ENCODE measurements at regions of chr4 and their contacts with region 1.

Region 1: DNA sequence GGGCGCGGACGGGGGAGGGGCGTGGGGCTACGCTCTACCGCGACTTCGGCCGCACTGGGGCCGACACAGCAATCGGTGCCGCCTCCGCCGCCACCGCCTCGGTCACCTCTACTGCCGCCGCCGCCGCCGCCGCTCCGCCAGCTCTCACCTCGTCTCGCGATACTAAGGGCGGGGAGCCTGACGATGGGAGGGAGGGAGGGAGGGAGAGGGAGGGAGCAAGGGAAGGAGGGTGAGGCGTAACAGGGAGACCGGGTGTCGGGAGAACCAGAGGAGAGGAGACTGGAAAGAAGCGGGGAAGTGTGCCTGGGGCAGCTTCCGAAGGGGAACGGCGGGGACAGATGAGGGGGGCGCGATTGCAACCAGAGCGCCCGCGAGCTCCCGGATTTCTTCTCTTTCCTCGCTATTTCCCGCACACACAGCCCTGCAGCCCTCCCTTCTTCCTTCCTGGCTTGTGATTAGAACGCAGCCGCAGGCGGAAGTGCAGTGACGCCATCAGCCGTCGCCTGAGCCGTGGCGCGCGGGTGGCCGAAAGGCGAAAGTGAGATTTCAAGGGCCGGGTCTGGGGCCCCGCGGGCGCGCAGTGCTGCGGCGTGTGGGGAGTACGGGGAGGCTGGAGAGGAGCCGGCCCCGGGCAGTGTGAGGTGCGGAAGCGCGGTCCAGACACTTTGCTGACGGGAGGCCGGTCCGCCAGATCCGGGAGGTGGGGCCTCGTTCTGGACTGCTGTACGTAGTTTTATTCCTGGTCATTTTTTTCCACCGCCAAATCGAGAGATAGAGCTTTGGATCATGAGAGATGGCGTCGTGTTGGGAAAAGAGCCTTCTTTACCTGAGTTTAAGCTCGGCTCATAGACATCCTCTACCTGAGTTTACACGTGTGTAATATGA is at the start of gene ANKRD17:
- DNase-seq: peak; percentile 95
- H3K4me3 Mint-ChIP-seq: peak within 1 kb of the TSS; percentile 82
- H3K27ac Mint-ChIP-seq: peak within 1 kb of the TSS; percentile 99
- H3K4me1 Mint-ChIP-seq: peaks cover 17% of the 10 kb centered on the region
- H3K27me3 Mint-ChIP-seq: no peaks in the 10 kb centered on the region
- CTCF ChIP-seq: no peak
- total RNA-seq, gene ANKRD17: 62.8 and 65.7 TPM in 2 replicates

Region 2: GRCh38 chr4:72496112-72496511 is 762.8 kb before region 1 on chr4:
- CTCF ChIA-PET with region 1: interaction called, 3 read pairs
- POLR2A ChIA-PET with region 1: no interaction called
- intact Hi-C with region 1: loop called (anchors 10 kb)
- DNase-seq: peak; percentile 20
- H3K4me3 Mint-ChIP-seq: no peak overlapping the region
- H3K27ac Mint-ChIP-seq: no peak overlapping the region
- H3K4me1 Mint-ChIP-seq: no peaks in the 10 kb centered on the region
- H3K27me3 Mint-ChIP-seq: no peaks in the 10 kb centered on the region
- CTCF ChIP-seq: peak; percentile 25

Region 3: GRCh38 chr4:73019462-73020047 is 239.4 kb before region 1 on chr4:
- CTCF ChIA-PET with region 1: no interaction called
- POLR2A ChIA-PET with region 1: no interaction called
- intact Hi-C with region 1: loop called (anchors 5 kb)
- DNase-seq: peak; percentile 66
- H3K4me3 Mint-ChIP-seq: no peak overlapping the region
- H3K27ac Mint-ChIP-seq: no peak overlapping the region
- H3K4me1 Mint-ChIP-seq: no peaks in the 10 kb centered on the region
- H3K27me3 Mint-ChIP-seq: peaks cover 9% of the 10 kb centered on the region
- CTCF ChIP-seq: peak; percentile 62

Region 4: GRCh38 chr4:73127839-73128453 is 131.0 kb before region 1 on chr4:
- CTCF ChIA-PET with region 1: interaction called, 26 read pairs
- POLR2A ChIA-PET with region 1: interaction called, 11 read pairs
- intact Hi-C with region 1: loop called (anchors 1 kb)
- DNase-seq: peak; percentile 22
- H3K4me3 Mint-ChIP-seq: no peak overlapping the region
- H3K27ac Mint-ChIP-seq: no peak overlapping the region
- H3K4me1 Mint-ChIP-seq: no peaks in the 10 kb centered on the region
- H3K27me3 Mint-ChIP-seq: no peaks in the 10 kb centered on the region
- CTCF ChIP-seq: no peak

Region 5: GRCh38 chr4:73172161-73172560 is 86.8 kb before region 1 on chr4:
- CTCF ChIA-PET with region 1: interaction called, 3 read pairs
- POLR2A ChIA-PET with region 1: interaction called, 13 read pairs
- intact Hi-C with region 1: no loop called
- DNase-seq: no peak
- H3K4me3 Mint-ChIP-seq: no peak overlapping the region
- H3K27ac Mint-ChIP-seq: peak overlapping the region; percentile 24
- H3K4me1 Mint-ChIP-seq: peaks cover 22% of the 10 kb centered on the region
- H3K27me3 Mint-ChIP-seq: no peaks in the 10 kb centered on the region
- CTCF ChIP-seq: no peak

Region 6: DNA sequence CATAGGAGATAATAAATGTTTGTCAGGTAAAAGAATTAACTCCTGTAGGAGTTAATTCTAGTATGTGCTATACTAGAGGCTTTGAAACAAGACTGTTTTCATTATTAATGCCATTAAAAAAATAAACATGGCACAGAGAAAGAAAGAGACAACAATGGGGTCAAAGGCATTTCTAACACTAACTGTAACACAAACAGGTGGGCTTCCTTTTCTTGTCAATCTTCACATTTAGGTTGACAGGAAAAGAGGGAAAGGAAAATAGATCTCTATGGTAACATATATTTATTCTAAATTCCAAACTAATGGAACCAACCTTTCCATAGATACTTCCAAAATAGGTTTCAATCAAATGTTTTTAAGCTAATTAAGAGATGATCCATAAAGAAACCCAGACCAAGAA is 10.1 kb before region 1 on chr4:
- CTCF ChIA-PET with region 1: interaction called, 4 read pairs
- POLR2A ChIA-PET with region 1: interaction called, 12 read pairs
- intact Hi-C with region 1: no loop called
- DNase-seq: no peak
- H3K4me3 Mint-ChIP-seq: no peak overlapping the region
- H3K27ac Mint-ChIP-seq: no peak overlapping the region
- H3K4me1 Mint-ChIP-seq: peaks cover 32% of the 10 kb centered on the region
- H3K27me3 Mint-ChIP-seq: no peaks in the 10 kb centered on the region
- CTCF ChIP-seq: no peak

Region 7: GRCh38 chr4:73281396-73281795 is 22.5 kb after region 1 on chr4:
- CTCF ChIA-PET with region 1: interaction called, 4 read pairs
- POLR2A ChIA-PET with region 1: interaction called, 19 read pairs
- intact Hi-C with region 1: no loop called
- DNase-seq: no peak
- H3K4me3 Mint-ChIP-seq: no peak overlapping the region
- H3K27ac Mint-ChIP-seq: no peak overlapping the region
- H3K4me1 Mint-ChIP-seq: no peaks in the 10 kb centered on the region
- H3K27me3 Mint-ChIP-seq: no peaks in the 10 kb centered on the region
- CTCF ChIP-seq: no peak

Measured in MCF 10A (cell line).